Activated T-helper 2 cell treated with anti-CD3 and anti-CD28 coated beads, Interferon-gamma antibody, Interleukin-2, Interleukin-4, amounts not matched to agents 10 μg/mL and 5 μg/mL and 100 μg/mL, durations not matched to agents 14 hours and 24 hours and 36 hours (primary cell): ENCODE measurements at regions of chr16 and their contacts with region 1.

Region 1: GRCh38 chr16:84738255-84739038 is 38.6 kb downstream of the USP10 start:
- DNase-seq: peak; percentile 66
- H3K4me3 Mint-ChIP-seq: no peak overlapping the region
- H3K27ac Mint-ChIP-seq: no peak overlapping the region
- H3K4me1 Mint-ChIP-seq: peaks cover 46% of the 10 kb centered on the region
- H3K27me3 Mint-ChIP-seq: no peaks in the 10 kb centered on the region

Region 2: DNA sequence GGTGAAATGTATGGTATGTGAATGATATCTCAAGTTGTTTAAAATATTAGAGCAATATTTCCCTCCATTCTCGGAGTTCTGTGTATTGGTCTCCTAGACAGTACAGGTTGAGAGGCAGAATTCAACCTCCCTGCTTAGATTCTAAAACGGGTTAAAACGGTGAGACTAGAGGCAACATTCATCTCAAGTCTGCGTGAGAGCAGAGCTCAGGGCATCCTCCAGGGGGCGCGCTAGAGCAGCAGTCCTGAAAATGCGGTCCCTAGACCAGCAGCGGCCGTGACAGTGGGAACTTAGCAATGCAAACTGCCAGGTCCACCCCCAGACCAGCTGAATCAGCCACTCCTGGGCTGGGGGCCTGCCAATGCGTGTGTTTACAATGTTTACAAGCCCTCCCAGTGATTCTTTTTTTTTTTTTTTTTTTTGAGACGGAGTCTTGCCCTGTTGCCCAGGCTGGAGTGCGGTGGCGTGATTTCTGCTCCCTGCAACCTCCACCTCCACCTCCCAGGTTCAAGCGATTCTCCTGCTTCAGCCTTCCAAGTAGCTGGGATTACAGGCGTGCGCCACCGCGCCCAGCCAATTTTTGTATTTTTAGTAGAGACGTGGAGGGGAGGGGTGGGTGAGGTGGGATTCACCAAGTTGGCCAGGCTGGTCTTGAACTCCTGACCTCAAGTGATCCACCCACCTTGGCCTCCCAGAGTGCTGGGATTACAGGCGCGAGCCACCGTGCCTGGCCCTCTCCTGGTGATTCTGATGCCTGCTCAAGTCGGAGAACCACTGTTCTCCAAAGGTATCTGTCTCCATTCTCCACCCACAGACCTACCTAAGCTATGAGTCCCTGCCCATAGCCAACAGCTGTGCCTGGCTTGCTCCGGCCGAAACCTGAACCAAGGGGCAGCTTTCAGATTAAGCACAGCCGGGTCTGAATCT is 65.9 kb before region 1 on chr16:
- intact Hi-C with region 1: loop called (anchors 1 kb)
- DNase-seq: peak; percentile 66
- H3K4me3 Mint-ChIP-seq: no peak overlapping the region
- H3K27ac Mint-ChIP-seq: no peak overlapping the region
- H3K4me1 Mint-ChIP-seq: peaks cover 7% of the 10 kb centered on the region
- H3K27me3 Mint-ChIP-seq: peaks cover 8% of the 10 kb centered on the region

Region 3: DNA sequence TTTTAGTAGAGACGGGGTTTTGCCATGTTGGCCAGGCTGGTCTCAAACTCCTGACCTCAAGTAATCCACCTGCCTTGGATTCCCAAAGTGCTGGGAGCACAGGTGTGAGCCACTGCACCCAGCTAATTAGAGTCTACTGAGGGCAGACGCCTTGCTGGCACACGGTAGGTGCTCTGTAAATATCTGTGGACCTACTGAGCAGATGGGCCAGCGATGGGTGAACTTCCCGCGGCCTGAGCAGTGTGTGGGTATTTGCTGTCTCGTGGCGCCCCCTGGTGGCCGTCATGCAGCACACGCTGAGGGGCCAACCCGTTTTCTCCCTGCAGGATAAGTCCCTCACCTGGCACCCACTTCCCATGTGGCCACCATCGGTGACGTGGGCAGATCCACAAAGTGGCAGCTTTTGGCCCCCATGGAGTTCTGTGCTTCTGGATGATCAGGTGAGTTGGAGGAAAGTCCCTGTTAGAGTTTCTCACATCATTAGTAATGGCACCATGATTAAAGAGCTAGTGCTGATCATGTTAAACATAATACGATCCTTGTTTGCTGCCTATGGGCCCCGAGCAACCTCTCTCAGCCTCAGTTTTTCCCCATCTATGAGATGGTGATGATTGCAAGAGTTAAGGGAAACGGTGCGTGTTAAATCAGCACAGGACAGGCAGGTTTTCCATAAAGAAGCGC is 232.1 kb after region 1 on chr16:
- intact Hi-C with region 1: no loop called
- DNase-seq: peak; percentile 68
- H3K4me3 Mint-ChIP-seq: no peak overlapping the region
- H3K27ac Mint-ChIP-seq: no peak overlapping the region
- H3K4me1 Mint-ChIP-seq: peaks cover 1% of the 10 kb centered on the region
- H3K27me3 Mint-ChIP-seq: no peaks in the 10 kb centered on the region